ENCODE measurements at regions of chr7 and their contacts with region 1.

Region 1: DNA sequence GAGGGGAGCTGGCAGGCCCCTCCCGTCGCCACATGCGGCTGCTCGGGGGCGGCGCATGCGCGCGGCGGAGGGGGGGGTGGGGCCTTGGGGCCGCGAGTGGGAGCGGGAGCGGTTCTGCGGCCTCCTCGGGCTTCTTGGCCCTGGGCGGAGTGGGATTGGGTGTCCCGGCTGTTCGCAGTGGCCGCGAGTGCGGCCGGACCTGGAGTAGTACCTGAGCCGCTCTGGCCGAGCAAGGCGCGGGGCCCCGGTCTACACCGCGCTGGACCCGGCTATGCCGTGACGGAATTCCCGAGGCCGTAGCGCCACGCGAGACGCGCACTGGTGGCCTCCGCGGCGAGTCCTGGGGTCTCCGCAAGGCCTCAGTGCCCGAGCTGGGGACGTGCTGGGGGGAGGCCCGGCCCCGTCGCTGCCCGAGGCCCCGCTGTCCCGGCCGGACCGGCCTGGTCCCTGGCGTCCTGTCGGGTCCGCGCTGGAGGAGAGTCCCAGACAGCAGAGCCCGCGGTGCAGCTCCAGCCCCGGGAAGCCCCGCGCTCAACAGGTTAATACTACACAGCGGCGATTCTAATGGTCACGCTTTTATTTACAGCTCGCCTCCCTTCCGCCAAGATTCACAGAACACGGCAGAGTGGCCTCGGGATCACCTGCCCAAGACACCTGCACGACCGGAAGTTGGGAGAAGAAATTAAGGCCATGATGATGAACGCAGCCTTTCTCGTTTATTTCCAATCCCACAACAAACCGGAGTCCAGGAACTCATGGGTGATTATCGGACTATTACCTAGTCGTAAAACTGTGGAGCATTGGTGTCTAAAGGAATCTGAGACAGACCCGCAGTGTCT is 671 bp upstream of the PAXIP1 start:
- DNase-seq: no peak
- ATAC-seq: peak; percentile 75
- H3K4me3 ChIP-seq: peak overlapping the region; percentile 77
- H3K27ac ChIP-seq: peak overlapping the region; percentile 93
- H3K4me1 ChIP-seq: 0 out of 2 replicates have a peak, but pooled peaks cover 5% of the 10 kb centered on the region
- H3K27me3 ChIP-seq: no peaks in the 10 kb centered on the region
- CTCF ChIP-seq: no peak
- EP300 ChIP-seq: no peak
- POLR2A ChIP-seq: peak; percentile 87
- RAD21 ChIP-seq: no peak

Region 2: GRCh38 chr7:154738216-154738615 is 265.4 kb before region 1 on chr7:
- CTCF ChIA-PET with region 1: no interaction called
- POLR2A ChIA-PET with region 1: no interaction called
- RAD21 ChIA-PET with region 1: no interaction called
- SMC1A ChIA-PET with region 1: no interaction called
- in situ Hi-C with region 1: no loop called
- intact Hi-C with region 1: no loop called
- DNase-seq: no peak
- ATAC-seq: no peak
- H3K4me3 ChIP-seq: no peak overlapping the region
- H3K27ac ChIP-seq: no peak overlapping the region
- H3K4me1 ChIP-seq: no peaks in the 10 kb centered on the region
- H3K27me3 ChIP-seq: no peaks in the 10 kb centered on the region
- CTCF ChIP-seq: no peak
- EP300 ChIP-seq: no peak
- POLR2A ChIP-seq: no peak
- RAD21 ChIP-seq: no peak

Region 3: GRCh38 chr7:154857767-154858681 is 145.6 kb before region 1 on chr7:
- CTCF ChIA-PET with region 1: no interaction called
- POLR2A ChIA-PET with region 1: no interaction called
- RAD21 ChIA-PET with region 1: no interaction called
- SMC1A ChIA-PET with region 1: no interaction called
- in situ Hi-C with region 1: no loop called
- intact Hi-C with region 1: no loop called
- DNase-seq: no peak
- ATAC-seq: no peak
- H3K4me3 ChIP-seq: no peak overlapping the region
- H3K27ac ChIP-seq: no peak overlapping the region
- H3K4me1 ChIP-seq: no peaks in the 10 kb centered on the region
- H3K27me3 ChIP-seq: no peaks in the 10 kb centered on the region
- CTCF ChIP-seq: no peak
- EP300 ChIP-seq: no peak
- POLR2A ChIP-seq: no peak
- RAD21 ChIP-seq: no peak

Region 4: GRCh38 chr7:154907651-154908620 is 95.7 kb before region 1 on chr7:
- CTCF ChIA-PET with region 1: interaction called, 8 read pairs
- POLR2A ChIA-PET with region 1: interaction called, 11 read pairs
- RAD21 ChIA-PET with region 1: no interaction called
- SMC1A ChIA-PET with region 1: no interaction called
- in situ Hi-C with region 1: no loop called
- intact Hi-C with region 1: no loop called
- DNase-seq: no peak
- ATAC-seq: no peak
- H3K4me3 ChIP-seq: no peak overlapping the region
- H3K27ac ChIP-seq: no peak overlapping the region
- H3K4me1 ChIP-seq: no peaks in the 10 kb centered on the region
- H3K27me3 ChIP-seq: no peaks in the 10 kb centered on the region
- CTCF ChIP-seq: no peak
- EP300 ChIP-seq: no peak
- POLR2A ChIP-seq: no peak
- RAD21 ChIP-seq: no peak

Region 5: GRCh38 chr7:155344600-155345433 is 341.2 kb after region 1 on chr7:
- CTCF ChIA-PET with region 1: interaction called, 7 read pairs
- POLR2A ChIA-PET with region 1: no interaction called
- RAD21 ChIA-PET with region 1: interaction called, 3 read pairs
- SMC1A ChIA-PET with region 1: no interaction called
- in situ Hi-C with region 1: no loop called
- intact Hi-C with region 1: loop called (anchors 10 kb)
- DNase-seq: no peak
- ATAC-seq: peak; percentile 98
- H3K4me3 ChIP-seq: peak overlapping the region; percentile 63; the same call in 1 of the 2 replicates
- H3K27ac ChIP-seq: no peak overlapping the region
- H3K4me1 ChIP-seq: peaks cover 5% of the 10 kb centered on the region; the same call in 1 of the 2 replicates
- H3K27me3 ChIP-seq: no peaks in the 10 kb centered on the region
- CTCF ChIP-seq: peak; percentile 71 to 73 (median 72); a peak in 5 of 6 replicates
- EP300 ChIP-seq: no peak
- POLR2A ChIP-seq: peak; percentile 29; the same call in 1 of the 2 replicates
- RAD21 ChIP-seq: peak; percentile 90

Measured in GM12878 (cell line).